ENCODE measurements at regions of chr4 and their contacts with region 1.

Region 1: DNA sequence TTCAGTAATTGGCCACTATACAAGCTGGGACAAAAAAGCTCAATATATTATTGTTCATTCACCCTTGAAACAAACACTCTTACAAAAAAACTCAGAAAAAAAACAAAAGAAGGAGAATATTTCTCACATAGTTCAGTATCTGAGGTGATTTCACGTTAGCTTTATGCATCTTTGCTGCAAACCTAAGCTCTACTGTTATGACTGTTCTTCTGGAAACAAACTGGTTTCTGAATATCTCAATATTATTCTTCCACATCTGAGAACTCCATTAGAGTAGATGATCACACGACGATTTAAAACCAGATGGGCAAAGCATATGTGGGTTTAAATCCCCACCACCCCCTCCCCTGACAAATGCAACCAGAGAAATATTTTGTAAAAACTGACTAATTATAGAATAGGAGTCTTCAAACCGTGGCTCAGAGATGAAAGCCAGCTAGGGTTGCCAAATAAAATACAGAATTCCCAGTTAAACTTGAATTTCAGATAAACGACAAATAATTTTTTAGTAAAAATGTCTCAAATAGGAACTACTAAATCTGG is 182.0 kb upstream of the FAM241A start:
- DNase-seq: no peak
- ATAC-seq: no peak
- H3K4me3 ChIP-seq: no peak overlapping the region
- H3K27ac ChIP-seq: no peak overlapping the region
- H3K4me1 ChIP-seq: no peaks in the 10 kb centered on the region
- H3K27me3 ChIP-seq: no peaks in the 10 kb centered on the region
- CTCF ChIP-seq: no peak

Region 2: DNA sequence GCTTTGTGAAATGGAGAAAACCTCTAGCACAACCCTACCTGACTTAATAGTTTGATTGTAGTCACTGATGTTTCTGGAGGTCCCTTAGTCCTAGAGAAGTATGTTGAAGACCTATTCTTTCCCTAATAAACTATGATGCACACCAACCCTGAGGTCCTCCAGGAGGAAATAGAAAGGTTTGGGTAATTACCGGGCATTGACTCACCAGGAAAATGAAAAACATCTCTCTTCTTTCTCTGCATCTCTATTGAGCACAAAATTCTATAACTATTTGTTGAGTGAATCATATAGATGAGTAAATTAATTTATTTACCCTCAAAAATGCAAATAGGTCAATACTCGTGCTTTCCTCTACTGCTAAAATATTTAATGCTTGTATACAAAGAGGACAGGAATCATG is 400.4 kb before region 1 on chr4:
- intact Hi-C with region 1: no loop called
- DNase-seq: no peak
- ATAC-seq: no peak
- H3K4me3 ChIP-seq: no peak overlapping the region
- H3K27ac ChIP-seq: no peak overlapping the region
- H3K4me1 ChIP-seq: no peaks in the 10 kb centered on the region
- H3K27me3 ChIP-seq: no peaks in the 10 kb centered on the region
- CTCF ChIP-seq: no peak

Region 3: DNA sequence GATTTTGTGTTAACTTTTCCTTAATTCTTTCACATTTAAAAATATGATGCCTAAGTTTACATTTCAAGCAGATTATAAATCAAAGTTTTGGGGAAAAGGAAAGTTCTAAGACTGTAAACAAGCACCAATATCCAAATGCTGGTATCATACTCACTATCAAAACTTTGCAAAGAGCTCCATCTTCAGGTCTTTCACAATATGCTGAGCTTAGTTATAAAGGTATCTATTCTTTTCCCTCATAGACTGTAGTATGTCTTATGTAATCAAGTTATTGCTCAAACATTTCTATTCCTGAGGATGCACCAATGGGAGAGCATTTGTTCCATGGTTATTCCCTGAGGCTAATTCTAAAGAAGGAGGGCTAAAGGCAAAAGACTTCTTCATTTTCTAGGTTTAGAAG is 25.9 kb before region 1 on chr4:
- intact Hi-C with region 1: loop called in 1 of 10 experiments (anchors 2 kb)
- DNase-seq: no peak
- ATAC-seq: no peak
- H3K4me3 ChIP-seq: no peak overlapping the region
- H3K27ac ChIP-seq: no peak overlapping the region
- H3K4me1 ChIP-seq: no peaks in the 10 kb centered on the region
- H3K27me3 ChIP-seq: peaks cover 0 to 11% (median 7%) of the 10 kb centered on the region in 7 donors
- CTCF ChIP-seq: no peak

Region 4: GRCh38 chr4:112109186-112110058 is 146.2 kb after region 1 on chr4:
- intact Hi-C with region 1: no loop called
- DNase-seq: no peak
- ATAC-seq: peak; percentile 54 to 87 (median 72)
- H3K4me3 ChIP-seq: peak overlapping the region in 1 of 10 donors; percentile 20
- H3K27ac ChIP-seq: peak overlapping the region in 9 of 10 donors; percentile 13 to 79 (median 53)
- H3K4me1 ChIP-seq: peaks cover 0 to 24% (median 17%) of the 10 kb centered on the region in 9 donors
- H3K27me3 ChIP-seq: no peaks in the 10 kb centered on the region
- CTCF ChIP-seq: peak in 2 of 9 donors; percentile 7 to 13